ENCODE measurements at regions of chr20 and their contacts with region 1.

Region 1: DNA sequence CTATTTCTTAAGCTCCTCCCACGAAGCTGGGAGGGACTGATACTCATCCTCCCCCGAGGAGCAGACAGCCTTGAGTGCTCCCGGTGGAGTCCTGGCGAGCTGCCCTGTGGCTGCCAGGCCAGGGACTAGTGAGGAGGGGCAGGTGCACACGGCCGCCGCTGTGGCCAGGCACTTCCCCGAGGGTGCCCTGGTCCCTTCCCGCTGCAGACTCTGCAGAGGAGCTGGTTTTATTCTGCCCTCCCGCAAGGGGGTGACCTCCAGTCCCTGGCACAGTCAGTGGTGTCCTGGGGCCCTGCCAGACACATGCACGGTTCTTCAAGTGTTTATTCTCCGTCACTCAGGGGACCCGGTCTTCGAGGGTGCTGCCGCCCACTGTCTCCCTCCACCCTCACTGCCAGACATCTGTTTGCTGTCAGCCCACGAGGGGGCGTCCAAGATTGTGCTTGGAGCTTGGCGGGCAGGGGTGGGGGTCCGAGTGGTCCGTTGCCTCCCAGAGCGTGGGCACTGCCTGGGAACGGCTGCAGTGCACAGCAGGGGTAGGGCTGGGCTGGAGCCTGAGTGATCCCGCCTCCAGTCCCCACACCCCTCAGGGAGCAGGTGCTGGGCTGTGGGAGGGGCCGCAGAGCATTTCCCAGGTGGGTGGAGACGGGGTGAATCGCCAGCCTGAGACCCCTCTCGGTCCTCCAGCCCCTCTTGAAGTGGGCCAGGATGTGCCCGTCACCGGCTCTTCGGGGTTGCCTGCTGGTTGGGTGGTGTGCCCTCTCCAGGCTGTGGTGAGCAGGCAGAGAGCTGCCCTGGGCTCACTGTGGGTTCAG is 3.1 kb upstream of the CABLES2 start:
- DNase-seq: peak; percentile 66
- H3K27ac ChIP-seq: peak overlapping the region; percentile 21
- CTCF ChIP-seq: peak; percentile 78

Region 2: GRCh38 chr20:62400021-62400420 is 10.1 kb before region 1 on chr20:
- CTCF ChIA-PET with region 1: interaction called, 12 read pairs
- POLR2A ChIA-PET with region 1: no interaction called
- DNase-seq: no peak
- H3K27ac ChIP-seq: peak overlapping the region; percentile 80
- CTCF ChIP-seq: no peak

Region 3: GRCh38 chr20:62427172-62428001 is 17.2 kb after region 1 on chr20 and contains the start of gene RBBP8NL:
- CTCF ChIA-PET with region 1: interaction called, 15 read pairs
- POLR2A ChIA-PET with region 1: interaction called, 3 read pairs
- DNase-seq: peak; percentile 93
- H3K27ac ChIP-seq: no peak within 1 kb of the TSS
- CTCF ChIP-seq: no peak

Measured in RWPE1 (cell line).